RWPE1 (cell line): ENCODE measurements at regions of chrX and their contacts with region 1.

Region 1: DNA sequence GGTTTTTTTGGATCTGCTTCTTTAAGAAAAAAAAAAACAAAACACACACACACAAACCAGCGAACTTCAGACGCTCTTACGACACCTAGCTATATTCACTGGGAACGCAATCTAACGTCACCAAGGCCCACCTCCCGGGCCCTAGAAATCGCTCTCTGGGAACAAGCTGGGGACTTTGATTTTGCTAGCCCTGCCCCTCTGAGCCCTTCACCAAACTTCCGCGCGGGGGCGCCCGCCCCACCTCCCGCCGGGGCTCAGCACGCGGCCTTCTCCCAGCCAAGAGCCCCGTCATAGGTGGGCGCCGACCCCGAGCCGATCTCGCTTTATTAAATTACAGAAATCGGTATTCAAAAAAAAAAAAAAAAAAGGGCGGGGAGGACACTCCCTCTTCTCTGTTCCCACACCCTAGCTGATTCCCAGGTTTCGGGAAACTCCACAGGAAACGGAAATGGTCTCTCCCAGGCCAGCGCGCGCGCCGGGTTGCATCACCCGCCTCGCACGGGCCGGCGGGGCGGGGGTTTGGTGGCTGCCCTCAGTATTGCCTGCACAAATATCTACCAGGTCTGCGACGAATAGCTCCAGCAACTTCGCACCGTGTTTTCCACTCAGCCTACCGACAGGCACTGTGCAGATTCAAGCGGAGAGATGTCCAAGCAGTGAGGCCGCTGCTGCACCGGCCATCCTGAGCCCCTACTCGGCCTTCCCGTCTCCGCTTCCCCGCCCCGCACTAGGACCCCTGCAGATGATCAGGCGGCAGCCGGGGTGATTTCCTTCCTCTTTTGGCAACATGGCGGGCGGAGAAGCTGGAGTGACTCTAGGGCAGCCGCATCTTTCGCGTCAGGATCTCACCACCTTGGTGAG is at the start of gene EIF2S3:
- DNase-seq: peak; percentile 81
- H3K27ac ChIP-seq: peak within 1 kb of the TSS; percentile 92
- CTCF ChIP-seq: peak; percentile 72

Region 2: GRCh38 chrX:24024819-24025740 is 29.3 kb before region 1 on chrX:
- CTCF ChIA-PET with region 1: interaction called, 8 read pairs
- POLR2A ChIA-PET with region 1: interaction called, 14 read pairs
- DNase-seq: peak; percentile 82
- H3K27ac ChIP-seq: peak overlapping the region; percentile 91
- CTCF ChIP-seq: peak; percentile 31

Region 3: DNA sequence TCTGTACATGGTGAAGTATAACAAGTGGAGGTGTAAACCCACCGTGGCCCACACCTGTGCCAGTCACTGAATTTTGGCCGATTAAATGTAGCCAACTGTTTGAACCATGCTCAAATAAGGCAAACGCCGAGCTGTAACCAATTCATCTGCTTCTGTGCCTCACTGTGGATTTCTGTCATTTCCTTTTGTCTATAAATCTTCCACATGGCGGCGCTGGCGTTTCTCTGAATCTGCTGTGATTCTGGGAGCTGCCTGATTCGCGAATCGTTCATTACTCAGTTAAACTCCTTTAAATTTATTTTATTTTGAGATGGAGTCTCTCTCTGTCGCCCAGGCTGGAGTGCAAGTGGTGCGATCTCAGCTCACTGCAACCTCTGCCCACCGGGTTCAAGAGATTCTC is 240.2 kb after region 1 on chrX:
- CTCF ChIA-PET with region 1: no interaction called
- POLR2A ChIA-PET with region 1: no interaction called
- DNase-seq: no peak
- H3K27ac ChIP-seq: no peak overlapping the region
- CTCF ChIP-seq: no peak